Pancreas (tissue), 10 donors: ENCODE measurements at regions of chr21 and their contacts with region 1.

Region 1: DNA sequence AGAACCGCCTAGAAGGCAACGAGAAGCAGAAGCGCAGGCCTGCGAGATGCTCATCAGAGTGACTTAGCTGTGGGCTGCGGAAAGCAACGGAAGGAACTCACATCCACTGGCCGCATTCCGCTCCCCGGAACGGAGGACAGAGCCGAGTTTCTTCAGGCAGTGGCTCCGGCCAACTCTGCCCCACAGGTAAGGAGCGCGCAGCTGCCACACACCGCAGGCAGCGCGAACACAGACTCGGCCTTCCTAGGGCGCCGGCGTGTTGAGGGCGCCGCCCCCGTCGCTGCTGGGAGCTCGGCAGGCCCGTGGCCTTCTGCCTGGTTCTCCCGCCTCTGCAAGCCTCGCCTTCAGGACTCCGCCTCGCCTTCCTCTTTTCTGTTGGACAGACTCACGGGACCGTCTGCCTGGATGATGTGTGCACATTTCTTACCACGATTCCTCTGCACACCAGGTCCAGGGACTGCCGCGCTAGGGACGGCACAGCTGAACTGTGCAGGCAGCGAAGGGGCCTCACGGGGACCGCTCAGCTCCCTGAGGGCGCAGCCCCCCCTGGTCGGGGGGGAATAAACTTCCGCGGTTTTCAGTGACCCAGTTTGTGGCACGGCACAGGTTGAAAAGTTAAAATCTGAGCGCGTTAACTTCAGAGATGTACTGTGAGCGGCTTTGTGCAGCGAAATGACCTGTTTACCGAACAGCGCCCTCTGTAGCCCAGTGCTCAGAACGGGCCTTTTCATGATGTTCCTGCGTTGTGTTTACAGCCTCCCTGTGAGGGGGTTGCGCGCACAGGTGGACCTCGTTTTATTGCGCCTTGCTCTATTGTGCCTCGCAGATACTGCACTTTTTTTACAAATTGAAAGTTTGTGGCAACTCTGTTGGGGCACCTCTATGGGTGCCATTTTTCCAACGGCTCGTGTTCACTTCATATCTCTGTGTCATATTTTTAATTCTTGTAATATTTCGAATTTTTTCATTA is 15.8 kb downstream of the TCP10L start:
- DNase-seq: peak; percentile 64 to 88 (median 74)
- ATAC-seq: peak; percentile 90 to 95 (median 93)
- H3K4me3 ChIP-seq: peak overlapping the region; percentile 29 to 71 (median 39)
- H3K27ac ChIP-seq: peak overlapping the region; percentile 41 to 87 (median 64)
- H3K4me1 ChIP-seq: peaks cover 0 to 12% (median 5%) of the 10 kb centered on the region in 3 donors
- H3K27me3 ChIP-seq: no peaks in the 10 kb centered on the region
- CTCF ChIP-seq: peak; percentile 49 to 74 (median 68)

Region 2: GRCh38 chr21:32412162-32413014 is 157.2 kb before region 1 on chr21 and contains the start of gene EVA1C:
- intact Hi-C with region 1: loop called in 1 of 3 experiments (anchors 5 kb)
- DNase-seq: peak; percentile 44 to 89 (median 80)
- ATAC-seq: peak; percentile 60 to 82 (median 76)
- H3K4me3 ChIP-seq: peak within 1 kb of the TSS; percentile 55 to 89 (median 72)
- H3K27ac ChIP-seq: peak within 1 kb of the TSS; percentile 91 to 94 (median 93)
- H3K4me1 ChIP-seq: peaks cover 0 to 10% (median 6%) of the 10 kb centered on the region in 3 donors
- H3K27me3 ChIP-seq: no peaks in the 10 kb centered on the region
- CTCF ChIP-seq: peak in 2 of 4 donors; percentile 11 to 18
- total RNA-seq, gene EVA1C: 7.9 to 13.4 (median 10.6) TPM

Region 3: GRCh38 chr21:32698971-32699693 is 129.6 kb after region 1 on chr21:
- intact Hi-C with region 1: no loop called
- DNase-seq: no peak
- ATAC-seq: no peak
- H3K4me3 ChIP-seq: no peak overlapping the region
- H3K27ac ChIP-seq: no peak overlapping the region
- H3K4me1 ChIP-seq: peaks cover 0 to 7% (median 5%) of the 10 kb centered on the region in 3 donors
- H3K27me3 ChIP-seq: no peaks in the 10 kb centered on the region
- CTCF ChIP-seq: no peak